MCF 10A (cell line): ENCODE measurements at regions of chr3 and their contacts with region 1.

Region 1: GRCh38 chr3:141575879-141576743 is 89.3 kb downstream of the RASA2 start:
- DNase-seq: peak; percentile 8
- H3K4me3 Mint-ChIP-seq: no peak overlapping the region
- H3K27ac Mint-ChIP-seq: peak overlapping the region; percentile 44
- H3K4me1 Mint-ChIP-seq: peaks cover 9% of the 10 kb centered on the region
- H3K27me3 Mint-ChIP-seq: no peaks in the 10 kb centered on the region
- CTCF ChIP-seq: peak; percentile 42

Region 2: GRCh38 chr3:140822401-140823047 is 753.6 kb before region 1 on chr3:
- CTCF ChIA-PET with region 1: no interaction called
- POLR2A ChIA-PET with region 1: no interaction called
- intact Hi-C with region 1: no loop called
- DNase-seq: no peak
- H3K4me3 Mint-ChIP-seq: no peak overlapping the region
- H3K27ac Mint-ChIP-seq: no peak overlapping the region
- H3K4me1 Mint-ChIP-seq: no peaks in the 10 kb centered on the region
- H3K27me3 Mint-ChIP-seq: peaks cover 15% of the 10 kb centered on the region
- CTCF ChIP-seq: no peak

Region 3: DNA sequence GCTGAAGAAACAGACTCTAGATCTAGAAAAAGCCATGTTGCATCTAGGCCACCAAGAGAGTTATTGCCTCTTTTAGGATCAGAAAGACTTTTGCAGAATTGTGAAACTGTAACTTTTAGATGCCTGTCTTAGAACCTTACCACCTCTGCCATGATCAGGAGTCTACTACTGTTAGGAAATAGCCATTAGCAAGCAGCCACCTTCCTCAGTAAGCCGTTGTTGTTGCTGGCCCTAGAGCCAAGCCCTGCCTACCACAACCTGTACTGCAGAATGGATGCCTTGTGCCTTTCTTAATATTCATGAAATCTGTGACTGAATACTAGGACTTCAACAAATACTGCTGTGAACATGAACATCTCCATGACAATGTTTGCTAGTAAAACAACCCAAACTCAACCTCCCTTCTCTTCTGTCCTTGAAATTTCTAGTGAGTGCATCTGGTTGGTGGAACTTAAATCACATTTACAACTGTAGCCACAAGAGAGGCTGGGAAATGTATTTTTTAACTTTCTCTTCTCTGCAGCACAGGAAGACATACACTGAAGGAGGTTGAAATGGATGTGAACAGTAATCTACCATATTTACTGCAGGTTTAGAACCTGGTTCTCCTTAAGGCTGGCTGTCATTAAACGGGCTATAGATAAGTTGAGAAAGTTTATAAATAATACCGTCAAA is 68.6 kb before region 1 on chr3:
- CTCF ChIA-PET with region 1: no interaction called
- POLR2A ChIA-PET with region 1: no interaction called
- intact Hi-C with region 1: no loop called
- DNase-seq: no peak
- H3K4me3 Mint-ChIP-seq: no peak overlapping the region
- H3K27ac Mint-ChIP-seq: no peak overlapping the region
- H3K4me1 Mint-ChIP-seq: peaks cover 20% of the 10 kb centered on the region
- H3K27me3 Mint-ChIP-seq: no peaks in the 10 kb centered on the region
- CTCF ChIP-seq: no peak

Region 4: GRCh38 chr3:141644931-141645330 is 68.8 kb after region 1 on chr3:
- CTCF ChIA-PET with region 1: interaction called, 3 read pairs
- POLR2A ChIA-PET with region 1: no interaction called
- intact Hi-C with region 1: loop called (anchors 1 kb)
- DNase-seq: peak; percentile 76
- H3K4me3 Mint-ChIP-seq: no peak overlapping the region
- H3K27ac Mint-ChIP-seq: no peak overlapping the region
- H3K4me1 Mint-ChIP-seq: peaks cover 6% of the 10 kb centered on the region
- H3K27me3 Mint-ChIP-seq: no peaks in the 10 kb centered on the region
- CTCF ChIP-seq: peak; percentile 75

Region 5: DNA sequence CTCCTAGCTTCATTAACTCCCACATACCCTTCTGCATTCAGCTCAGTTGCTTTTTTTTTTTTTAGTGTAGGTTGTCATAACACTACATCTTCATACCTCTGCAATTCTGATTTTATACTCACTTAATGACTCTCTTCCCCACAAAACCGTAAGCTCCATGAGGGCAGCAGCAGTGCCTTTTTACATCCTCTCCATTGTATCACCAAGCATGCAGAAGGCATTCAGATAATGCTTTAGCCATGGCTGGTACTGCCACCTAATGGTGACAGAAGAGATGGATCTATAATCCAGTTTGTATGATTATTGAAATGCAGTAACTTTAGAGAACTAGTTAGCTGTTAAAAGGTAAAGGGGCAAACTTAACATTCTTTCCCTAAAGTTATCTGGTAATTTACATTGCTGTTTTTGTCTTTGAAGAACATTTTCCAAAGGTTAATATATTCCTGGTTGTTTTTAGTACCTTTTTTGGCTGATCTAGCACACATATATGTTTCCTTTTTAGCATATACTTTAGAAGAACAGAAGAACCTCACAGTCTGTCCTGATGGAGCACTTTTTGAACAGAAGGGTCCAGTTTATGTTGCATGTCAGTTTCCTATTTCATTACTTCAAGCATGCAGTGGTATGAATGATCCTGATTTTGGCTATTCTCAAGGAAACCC is 337.2 kb after region 1 on chr3:
- CTCF ChIA-PET with region 1: interaction called, 4 read pairs
- POLR2A ChIA-PET with region 1: interaction called, 4 read pairs
- intact Hi-C with region 1: loop called (anchors 2 kb)
- DNase-seq: peak; percentile 74
- H3K4me3 Mint-ChIP-seq: no peak overlapping the region
- H3K27ac Mint-ChIP-seq: no peak overlapping the region
- H3K4me1 Mint-ChIP-seq: peaks cover 13% of the 10 kb centered on the region
- H3K27me3 Mint-ChIP-seq: no peaks in the 10 kb centered on the region
- CTCF ChIP-seq: peak; percentile 53

Region 6: GRCh38 chr3:141998669-141999290 is 422.7 kb after region 1 on chr3:
- CTCF ChIA-PET with region 1: no interaction called
- POLR2A ChIA-PET with region 1: no interaction called
- intact Hi-C with region 1: loop called (anchors 2 kb)
- DNase-seq: peak; percentile 23
- H3K4me3 Mint-ChIP-seq: no peak overlapping the region
- H3K27ac Mint-ChIP-seq: no peak overlapping the region
- H3K4me1 Mint-ChIP-seq: no peaks in the 10 kb centered on the region
- H3K27me3 Mint-ChIP-seq: no peaks in the 10 kb centered on the region
- CTCF ChIP-seq: peak; percentile 35